Activated CD8-positive, alpha-beta T cell treated with anti-CD3 and anti-CD28 coated beads, Interleukin-2, amount 10 ng/mL, durations not matched to agents 7 days and 5 days (primary cell): ENCODE measurements at regions of chr1 and their contacts with region 1.

Region 1: DNA sequence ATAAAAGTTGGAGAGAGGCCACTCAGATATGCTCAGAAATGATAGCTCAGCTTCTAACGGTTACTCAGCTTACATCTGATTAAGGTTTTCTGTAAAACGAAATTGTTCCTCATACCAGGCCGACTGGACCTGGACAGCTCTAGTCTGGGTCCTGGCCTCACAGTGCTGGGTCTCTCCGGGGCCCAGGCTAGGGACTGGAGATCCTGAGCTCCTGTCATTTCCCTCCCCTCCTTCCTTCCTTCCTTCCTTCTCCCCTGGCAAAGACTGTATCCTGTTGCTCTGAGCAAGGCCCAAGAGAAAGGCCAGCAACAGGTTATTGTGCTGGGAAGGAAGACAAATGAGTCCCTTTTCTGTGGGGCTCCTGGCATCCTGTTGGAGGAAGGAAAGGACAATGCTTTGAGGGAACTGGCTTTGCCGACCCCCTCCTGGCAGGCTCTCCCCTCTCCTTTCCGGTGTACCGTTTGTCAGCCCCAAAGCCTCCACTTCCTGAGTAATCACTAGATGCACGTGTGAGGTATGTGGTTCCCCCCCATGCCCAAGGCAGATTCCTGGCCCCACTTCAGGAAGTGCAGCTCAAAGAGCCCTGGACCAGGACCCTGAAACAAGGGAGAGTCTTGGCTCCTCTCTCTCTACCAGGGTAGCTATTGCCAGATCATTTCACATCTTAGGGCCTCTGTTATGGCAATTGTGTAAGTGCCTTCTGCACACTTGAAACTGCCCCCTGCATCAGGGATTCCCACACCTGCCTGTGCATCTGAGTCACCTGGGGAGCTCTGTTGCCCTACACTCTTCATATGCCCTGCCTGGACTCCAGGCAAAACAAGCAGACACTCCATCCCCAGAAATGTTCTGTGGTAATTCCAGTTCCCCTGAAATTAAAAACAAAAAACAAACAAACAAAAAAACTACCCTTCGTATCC is 212.7 kb upstream of the FGGY start:
- DNase-seq: peak; percentile 28
- ATAC-seq: peak; percentile 51
- H3K4me3 Mint-ChIP-seq: no peak overlapping the region
- H3K27ac Mint-ChIP-seq: peak overlapping the region; percentile 54
- H3K4me1 Mint-ChIP-seq: peaks cover 11% of the 10 kb centered on the region
- H3K27me3 Mint-ChIP-seq: no peaks in the 10 kb centered on the region

Region 2: GRCh38 chr1:59071289-59071688 is 12.9 kb before region 1 on chr1:
- CTCF ChIA-PET with region 1: interaction called, 18 read pairs
- POLR2A ChIA-PET with region 1: no interaction called
- DNase-seq: peak; percentile 32
- ATAC-seq: peak; percentile 70
- H3K4me3 Mint-ChIP-seq: peak overlapping the region; percentile 17
- H3K27ac Mint-ChIP-seq: peak overlapping the region; percentile 73
- H3K4me1 Mint-ChIP-seq: peaks cover 24% of the 10 kb centered on the region
- H3K27me3 Mint-ChIP-seq: no peaks in the 10 kb centered on the region